Stomach (tissue), 19 donors: ENCODE measurements at regions of chr7 and their contacts with region 1.

Region 1: GRCh38 chr7:120987683-120988590 is 574 bp upstream of the CPED1 start:
- DNase-seq: peak; percentile 86 to 96
- H3K4me3 ChIP-seq: peak overlapping the region; percentile 41 to 54 (median 48)
- H3K27ac ChIP-seq: peak overlapping the region; percentile 10 to 90 (median 85)
- H3K4me1 ChIP-seq: peaks cover 0 to 22% (median 16%) of the 10 kb centered on the region in 4 donors
- H3K27me3 ChIP-seq: peaks cover 0 to 5% (median 3%) of the 10 kb centered on the region in 3 donors
- CTCF ChIP-seq: peak in 5 of 7 experiments; percentile 63 to 92 (median 83)
- EP300 ChIP-seq: no peak
- POLR2A ChIP-seq: no peak

Region 2: DNA sequence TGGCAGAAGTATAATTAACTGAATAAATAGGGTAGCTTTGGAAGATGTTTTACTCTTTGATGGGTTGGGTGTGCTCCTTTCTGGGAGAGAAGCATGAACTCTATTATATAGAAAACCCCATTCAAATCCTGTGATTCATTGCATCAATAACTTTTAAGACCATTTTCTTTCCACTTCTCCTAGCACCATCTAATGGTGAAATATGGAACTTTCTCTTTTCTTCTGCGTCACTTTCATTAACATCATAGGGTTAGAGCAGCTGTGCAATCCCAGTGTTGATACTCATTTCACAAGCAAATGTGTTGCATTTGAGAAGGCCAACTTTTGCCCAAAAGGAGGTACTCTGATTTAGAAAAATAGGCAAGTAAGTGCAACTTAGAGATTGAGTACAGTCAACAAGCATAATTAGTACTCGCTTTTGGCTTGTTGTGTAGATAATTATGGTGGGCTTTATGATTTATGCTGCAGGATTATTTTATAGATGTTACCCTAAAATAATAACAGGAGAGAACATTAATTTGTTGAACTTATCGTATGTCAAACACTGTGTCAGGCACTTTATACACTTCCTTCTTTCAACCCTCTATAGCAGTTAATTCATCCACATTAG is 93.5 kb after region 1 on chr7:
- intact Hi-C with region 1: loop called (anchors 5 kb)
- DNase-seq: peak in 1 of 2 donors; percentile 80
- H3K4me3 ChIP-seq: no peak overlapping the region
- H3K27ac ChIP-seq: peak overlapping the region in 1 of 5 donors; percentile 60
- H3K4me1 ChIP-seq: peaks cover 0 to 29% (median 14%) of the 10 kb centered on the region in 4 donors
- H3K27me3 ChIP-seq: no peaks in the 10 kb centered on the region
- CTCF ChIP-seq: peak in 5 of 7 experiments; percentile 45 to 67 (median 64)
- EP300 ChIP-seq: no peak
- POLR2A ChIP-seq: no peak

Region 3: GRCh38 chr7:121113288-121113687 is 125.4 kb after region 1 on chr7:
- intact Hi-C with region 1: loop called (anchors 10 kb)
- DNase-seq: no peak
- H3K4me3 ChIP-seq: no peak overlapping the region
- H3K27ac ChIP-seq: no peak overlapping the region
- H3K4me1 ChIP-seq: no peaks in the 10 kb centered on the region
- H3K27me3 ChIP-seq: no peaks in the 10 kb centered on the region
- CTCF ChIP-seq: no peak
- EP300 ChIP-seq: no peak
- POLR2A ChIP-seq: no peak

Region 4: GRCh38 chr7:121547544-121548092 is 559.7 kb after region 1 on chr7:
- intact Hi-C with region 1: no loop called
- DNase-seq: peak in 1 of 2 donors; percentile 84
- H3K4me3 ChIP-seq: no peak overlapping the region
- H3K27ac ChIP-seq: no peak overlapping the region
- H3K4me1 ChIP-seq: peaks cover 0 to 17% (median 3%) of the 10 kb centered on the region in 4 donors
- H3K27me3 ChIP-seq: no peaks in the 10 kb centered on the region
- CTCF ChIP-seq: peak in 5 of 7 experiments; percentile 28 to 76 (median 63)
- EP300 ChIP-seq: no peak
- POLR2A ChIP-seq: no peak